Activated CD8-positive, alpha-beta T cell treated with anti-CD3 and anti-CD28 coated beads for 36 hours (primary cell): ENCODE measurements at regions of chr17 and their contacts with region 1.

Region 1: GRCh38 chr17:43316522-43317142 is 82.2 kb upstream of the ARL4D start:
- DNase-seq: peak; percentile 39
- ATAC-seq: no peak
- H3K4me3 Mint-ChIP-seq: no peak overlapping the region
- H3K27ac Mint-ChIP-seq: no peak overlapping the region
- H3K4me1 Mint-ChIP-seq: peaks cover 19% of the 10 kb centered on the region
- H3K27me3 Mint-ChIP-seq: no peaks in the 10 kb centered on the region
- CTCF ChIP-seq: no peak

Region 2: GRCh38 chr17:43118679-43119615 is 197.7 kb before region 1 on chr17:
- CTCF ChIA-PET with region 1: no interaction called
- POLR2A ChIA-PET with region 1: interaction called, 35 read pairs
- intact Hi-C with region 1: no loop called
- DNase-seq: no peak
- ATAC-seq: no peak
- H3K4me3 Mint-ChIP-seq: no peak overlapping the region
- H3K27ac Mint-ChIP-seq: no peak overlapping the region
- H3K4me1 Mint-ChIP-seq: peaks cover 3% of the 10 kb centered on the region
- H3K27me3 Mint-ChIP-seq: no peaks in the 10 kb centered on the region
- CTCF ChIP-seq: no peak

Region 3: DNA sequence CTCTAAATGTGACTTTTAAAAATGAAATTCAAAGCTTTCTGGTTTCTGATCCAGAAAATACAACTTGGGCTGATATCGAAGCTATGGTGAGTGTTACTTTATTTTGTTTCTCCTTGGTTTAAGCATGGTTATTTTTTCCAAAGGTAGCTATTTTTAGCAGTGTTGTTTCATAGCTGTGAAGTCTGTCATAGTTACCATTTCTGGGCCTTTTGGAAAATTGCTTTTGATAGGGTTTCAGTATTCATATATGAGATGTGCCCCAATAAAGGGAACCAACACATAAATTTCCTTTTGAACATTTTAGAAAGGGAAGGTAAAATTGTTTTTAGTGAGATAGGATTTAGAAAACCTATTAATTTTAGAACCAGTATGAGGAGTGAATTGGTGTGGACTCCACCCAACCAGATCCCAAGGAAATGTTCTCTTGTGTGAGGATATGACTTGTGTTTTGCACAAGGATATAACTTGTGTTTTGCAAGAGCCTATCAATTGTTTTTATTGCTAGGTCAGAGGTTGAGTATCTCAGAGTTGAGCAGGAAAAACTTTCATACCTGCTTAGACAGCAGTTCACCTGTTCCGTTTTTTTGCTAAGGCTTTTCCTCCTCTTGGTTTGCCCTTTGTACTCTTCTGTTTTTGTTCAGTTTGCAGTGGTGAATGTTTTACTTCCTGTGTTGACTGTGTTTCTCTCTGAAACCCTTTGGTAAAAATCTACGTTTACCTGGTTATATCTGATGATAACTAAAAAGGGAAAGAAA is 140.6 kb before region 1 on chr17:
- CTCF ChIA-PET with region 1: interaction called, 3 read pairs
- POLR2A ChIA-PET with region 1: interaction called, 61 read pairs
- intact Hi-C with region 1: no loop called
- DNase-seq: no peak
- ATAC-seq: no peak
- H3K4me3 Mint-ChIP-seq: peak overlapping the region; percentile 51
- H3K27ac Mint-ChIP-seq: peak overlapping the region; percentile 88
- H3K4me1 Mint-ChIP-seq: peaks cover 47% of the 10 kb centered on the region
- H3K27me3 Mint-ChIP-seq: no peaks in the 10 kb centered on the region
- CTCF ChIP-seq: no peak

Region 4: GRCh38 chr17:43211480-43212402 is 104.9 kb before region 1 on chr17 and contains the start of gene TMEM106A:
- CTCF ChIA-PET with region 1: interaction called, 3 read pairs
- POLR2A ChIA-PET with region 1: interaction called, 113 read pairs
- intact Hi-C with region 1: no loop called
- DNase-seq: peak; percentile 81
- ATAC-seq: peak; percentile 95
- H3K4me3 Mint-ChIP-seq: peak within 1 kb of the TSS; percentile 98
- H3K27ac Mint-ChIP-seq: peak within 1 kb of the TSS; percentile 90
- H3K4me1 Mint-ChIP-seq: peaks cover 28% of the 10 kb centered on the region
- H3K27me3 Mint-ChIP-seq: no peaks in the 10 kb centered on the region
- CTCF ChIP-seq: peak; percentile 49
- total RNA-seq, gene TMEM106A: 9.2 to 9.8 TPM

Region 5: GRCh38 chr17:43360739-43361505 is 44.3 kb after region 1 on chr17:
- CTCF ChIA-PET with region 1: no interaction called
- POLR2A ChIA-PET with region 1: interaction called, 103 read pairs
- intact Hi-C with region 1: no loop called
- DNase-seq: peak; percentile 97
- ATAC-seq: peak; percentile 86
- H3K4me3 Mint-ChIP-seq: peak overlapping the region; percentile 83
- H3K27ac Mint-ChIP-seq: peak overlapping the region; percentile 99
- H3K4me1 Mint-ChIP-seq: peaks cover 43% of the 10 kb centered on the region
- H3K27me3 Mint-ChIP-seq: peaks cover 4% of the 10 kb centered on the region
- CTCF ChIP-seq: no peak

Region 6: GRCh38 chr17:43449470-43450248 is 133.0 kb after region 1 on chr17:
- CTCF ChIA-PET with region 1: no interaction called
- POLR2A ChIA-PET with region 1: no interaction called
- intact Hi-C with region 1: no loop called
- DNase-seq: no peak
- ATAC-seq: no peak
- H3K4me3 Mint-ChIP-seq: no peak overlapping the region
- H3K27ac Mint-ChIP-seq: no peak overlapping the region
- H3K4me1 Mint-ChIP-seq: no peaks in the 10 kb centered on the region
- H3K27me3 Mint-ChIP-seq: peaks cover 8% of the 10 kb centered on the region
- CTCF ChIP-seq: no peak